ENCODE measurements at regions of chr17 and their contacts with region 1.

Region 1: GRCh38 chr17:1399679-1400512 is at the start of gene YWHAE:
- DNase-seq: peak; percentile 96
- H3K4me3 Mint-ChIP-seq: peak within 1 kb of the TSS; percentile 92
- H3K27ac Mint-ChIP-seq: peak within 1 kb of the TSS; percentile 100
- H3K4me1 Mint-ChIP-seq: peaks cover 11% of the 10 kb centered on the region
- H3K27me3 Mint-ChIP-seq: no peaks in the 10 kb centered on the region
- CTCF ChIP-seq: no peak
- total RNA-seq, gene YWHAE: 813 and 886 TPM in 2 replicates

Region 2: DNA sequence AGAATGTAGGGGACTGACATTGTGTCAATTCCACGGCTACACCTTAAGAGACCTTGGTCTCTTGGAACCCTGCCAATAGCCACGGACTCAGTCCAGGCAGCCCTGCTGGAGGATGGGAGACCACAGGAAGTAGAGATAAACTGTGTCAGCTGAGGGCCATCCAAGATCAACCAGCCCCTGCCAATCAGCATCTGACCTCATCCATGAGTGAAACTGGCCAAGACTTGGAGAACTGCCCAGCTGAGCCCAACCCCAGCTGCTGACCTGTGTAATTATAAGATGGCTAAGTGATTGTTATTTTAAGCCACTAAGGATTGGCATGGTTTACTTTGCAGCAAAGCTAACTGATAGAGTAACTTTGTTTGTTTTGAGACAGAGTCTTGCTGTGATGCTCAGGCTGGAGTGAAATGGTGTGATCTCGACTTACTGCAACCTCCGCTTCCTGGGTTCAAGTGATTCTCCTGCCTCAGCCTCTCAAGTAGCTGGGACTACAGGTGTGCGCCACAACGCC is 13.4 kb after region 1 on chr17:
- CTCF ChIA-PET with region 1: interaction called, 3 read pairs
- POLR2A ChIA-PET with region 1: interaction called, 12 read pairs
- intact Hi-C with region 1: no loop called
- DNase-seq: peak; percentile 93
- H3K4me3 Mint-ChIP-seq: no peak overlapping the region
- H3K27ac Mint-ChIP-seq: no peak overlapping the region
- H3K4me1 Mint-ChIP-seq: peaks cover 9% of the 10 kb centered on the region
- H3K27me3 Mint-ChIP-seq: no peaks in the 10 kb centered on the region
- CTCF ChIP-seq: no peak

Region 3: DNA sequence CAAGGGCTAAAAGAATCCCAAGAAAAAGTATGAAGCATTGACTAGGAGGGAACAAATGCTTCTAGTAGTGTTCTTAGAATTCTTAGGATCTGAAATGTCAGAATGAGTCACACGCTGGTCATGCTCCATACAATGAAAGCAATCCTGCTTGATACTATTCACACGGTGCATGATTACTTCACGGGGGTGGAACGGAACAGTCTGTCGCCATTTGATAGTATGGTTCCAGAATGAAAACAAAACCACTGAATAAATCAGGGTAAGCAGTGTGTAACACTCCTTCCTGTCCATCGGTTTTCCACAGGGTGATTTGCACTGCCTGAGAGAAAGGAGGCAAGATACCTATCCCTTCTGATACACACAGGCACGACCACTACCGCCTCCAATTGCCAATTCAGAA is 23.0 kb after region 1 on chr17:
- CTCF ChIA-PET with region 1: interaction called, 4 read pairs
- POLR2A ChIA-PET with region 1: interaction called, 16 read pairs
- intact Hi-C with region 1: no loop called
- DNase-seq: peak; percentile 94
- H3K4me3 Mint-ChIP-seq: peak overlapping the region; percentile 58
- H3K27ac Mint-ChIP-seq: peak overlapping the region; percentile 77
- H3K4me1 Mint-ChIP-seq: peaks cover 23% of the 10 kb centered on the region
- H3K27me3 Mint-ChIP-seq: no peaks in the 10 kb centered on the region
- CTCF ChIP-seq: no peak

Region 4: DNA sequence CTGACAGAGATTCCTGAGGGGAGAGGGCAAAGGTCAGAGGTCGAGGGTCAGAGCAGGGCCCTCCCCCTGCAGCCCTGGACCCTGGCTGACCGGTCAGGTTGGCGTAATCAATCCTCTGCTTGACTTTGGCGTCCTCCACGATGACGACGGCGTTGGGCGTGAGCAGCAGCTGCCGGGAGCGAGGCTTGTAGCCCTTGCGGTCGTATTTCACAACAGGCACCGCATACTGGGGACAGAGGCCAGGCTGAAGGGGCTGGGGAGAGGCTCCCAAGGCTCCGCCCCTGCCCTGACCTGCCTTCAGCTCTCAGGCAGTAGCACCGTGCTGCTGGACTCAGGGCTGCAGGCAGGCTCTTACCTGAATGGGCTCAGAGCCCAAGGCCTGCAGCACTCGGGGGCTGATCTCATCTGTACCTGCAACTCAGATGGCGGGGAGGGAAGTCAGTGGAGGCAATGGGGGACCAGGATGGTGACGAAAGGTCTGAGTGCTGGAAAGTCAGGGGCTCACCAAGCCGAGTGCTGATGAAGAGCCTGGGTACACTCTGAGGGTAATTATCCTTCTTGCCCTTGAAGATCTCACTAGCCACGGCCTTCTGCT is 68.1 kb after region 1 on chr17:
- CTCF ChIA-PET with region 1: no interaction called
- POLR2A ChIA-PET with region 1: no interaction called
- intact Hi-C with region 1: no loop called
- DNase-seq: no peak
- H3K4me3 Mint-ChIP-seq: no peak overlapping the region
- H3K27ac Mint-ChIP-seq: no peak overlapping the region
- H3K4me1 Mint-ChIP-seq: no peaks in the 10 kb centered on the region
- H3K27me3 Mint-ChIP-seq: no peaks in the 10 kb centered on the region
- CTCF ChIP-seq: no peak

Measured in MCF 10A (cell line).